A549 (cell line): ENCODE measurements at regions of chr1 and their contacts with region 1.

Region 1: GRCh38 chr1:8858888-8859706 is 19.4 kb downstream of the ENO1 start:
- DNase-seq: peak in 1 of 2 experiments; percentile 72
- ATAC-seq: peak; percentile 4 to 20; a peak in 5 of 6 replicates
- H3K4me3 ChIP-seq: no peak overlapping the region
- H3K27ac ChIP-seq: peak overlapping the region in 1 of 2 experiments; percentile 56; a peak in 2 of 6 replicates
- H3K4me1 ChIP-seq: peaks cover 40% of the 10 kb centered on the region; the same call in 2 of the 3 replicates
- CTCF ChIP-seq: peak; percentile 52
- EP300 ChIP-seq: no peak
- POLR2A ChIP-seq: no peak
- RAD21 ChIP-seq: peak; percentile 37 to 43; a peak in 4 of 5 replicates

Region 2: DNA sequence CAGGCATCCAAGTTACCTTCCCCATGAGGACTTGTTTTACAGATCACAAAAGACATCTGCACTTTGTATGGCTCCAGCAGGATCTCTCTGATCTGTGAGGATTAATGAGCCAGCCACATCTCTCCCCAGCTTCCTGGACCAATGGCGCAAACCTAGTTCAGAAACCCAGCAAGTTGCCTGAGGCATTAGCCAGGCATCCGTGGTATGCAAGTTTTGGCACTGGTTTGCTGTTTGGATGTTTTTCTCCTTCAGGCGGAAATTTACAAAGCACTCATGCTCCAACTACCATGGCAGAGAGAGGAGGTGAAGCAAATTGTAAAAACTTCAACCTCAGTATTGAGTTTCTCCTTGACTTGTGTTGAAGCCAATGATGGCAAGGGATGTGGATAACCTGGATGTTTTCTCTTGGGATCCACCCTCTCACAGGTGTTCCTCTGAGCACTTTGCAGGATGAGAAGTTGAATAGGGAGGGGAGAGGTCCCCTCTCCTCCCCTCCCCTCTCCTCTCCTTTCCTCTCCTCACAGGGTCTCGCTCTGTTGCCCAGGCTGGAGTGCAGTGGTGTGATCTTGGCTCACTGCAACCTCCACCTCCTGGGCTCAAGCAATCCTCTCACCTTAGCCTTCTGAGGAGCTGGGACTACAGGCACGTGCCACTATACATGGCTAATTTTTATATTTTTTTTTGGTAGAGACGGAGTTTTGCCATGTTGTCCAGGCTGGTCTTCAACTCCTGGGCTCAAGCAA is 45.0 kb after region 1 on chr1:
- CTCF ChIA-PET with region 1: interaction called, 24 read pairs
- POLR2A ChIA-PET with region 1: no interaction called
- DNase-seq: peak; percentile 70 to 90
- ATAC-seq: peak; percentile 83 to 87
- H3K4me3 ChIP-seq: no peak overlapping the region
- H3K27ac ChIP-seq: peak overlapping the region; percentile 86 to 96
- H3K4me1 ChIP-seq: peaks cover 76% of the 10 kb centered on the region
- CTCF ChIP-seq: no peak
- EP300 ChIP-seq: peak in 1 of 2 experiments; percentile 69; a peak in 1 of 5 replicates
- POLR2A ChIP-seq: no peak
- RAD21 ChIP-seq: no peak

Region 3: DNA sequence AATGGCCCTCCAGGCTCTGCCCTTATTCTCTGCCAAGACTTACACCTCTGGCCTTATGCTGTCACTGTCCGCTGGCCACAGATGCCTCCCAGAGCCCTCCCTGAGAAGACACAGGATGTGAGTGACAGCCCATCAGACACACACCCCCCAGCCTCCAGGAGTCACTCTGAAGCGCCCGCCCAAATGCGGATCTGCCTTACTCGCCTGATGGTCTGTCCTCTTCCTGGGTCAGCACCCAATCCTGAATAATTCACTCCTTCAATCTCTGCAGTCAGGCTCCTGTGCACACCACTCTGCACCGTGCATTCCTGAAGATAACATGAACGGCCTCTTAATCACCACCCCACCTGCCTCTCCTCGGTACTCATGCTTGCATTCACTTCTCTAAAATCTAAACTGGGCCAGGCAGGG is 950.0 kb after region 1 on chr1:
- CTCF ChIA-PET with region 1: no interaction called
- POLR2A ChIA-PET with region 1: no interaction called
- DNase-seq: no peak
- ATAC-seq: no peak
- H3K4me3 ChIP-seq: no peak overlapping the region
- H3K27ac ChIP-seq: no peak overlapping the region
- H3K4me1 ChIP-seq: peaks cover 15% of the 10 kb centered on the region; the same call in 2 of the 3 replicates
- CTCF ChIP-seq: no peak
- EP300 ChIP-seq: no peak
- POLR2A ChIP-seq: no peak
- RAD21 ChIP-seq: no peak